BJ (cell line): ENCODE measurements at regions of chr11 and their contacts with region 1.

Region 1: DNA sequence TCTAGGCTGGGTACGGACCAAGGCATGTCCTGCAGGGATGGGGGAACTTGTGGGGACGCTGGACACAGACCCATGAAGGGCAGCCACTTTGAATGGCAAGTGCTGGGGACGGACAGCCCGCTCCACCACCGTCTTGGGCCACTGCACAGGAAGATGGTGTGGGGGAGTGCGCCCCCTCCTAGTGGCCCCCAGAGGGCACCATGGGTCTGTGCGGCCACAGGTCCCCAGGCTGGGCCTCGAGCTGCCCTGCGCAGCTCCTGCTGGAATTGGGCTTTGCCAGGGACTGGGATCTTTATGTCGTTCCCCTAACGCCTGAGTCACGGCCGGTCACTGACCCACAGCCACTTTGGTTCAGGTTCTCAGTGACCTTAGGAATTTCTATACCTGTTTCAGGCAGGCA is 44.4 kb downstream of the NAT10 start:
- DNase-seq: no peak
- H3K4me3 ChIP-seq: no peak overlapping the region
- H3K27me3 ChIP-seq: no peaks in the 10 kb centered on the region
- CTCF ChIP-seq: peak; percentile 57

Region 2: DNA sequence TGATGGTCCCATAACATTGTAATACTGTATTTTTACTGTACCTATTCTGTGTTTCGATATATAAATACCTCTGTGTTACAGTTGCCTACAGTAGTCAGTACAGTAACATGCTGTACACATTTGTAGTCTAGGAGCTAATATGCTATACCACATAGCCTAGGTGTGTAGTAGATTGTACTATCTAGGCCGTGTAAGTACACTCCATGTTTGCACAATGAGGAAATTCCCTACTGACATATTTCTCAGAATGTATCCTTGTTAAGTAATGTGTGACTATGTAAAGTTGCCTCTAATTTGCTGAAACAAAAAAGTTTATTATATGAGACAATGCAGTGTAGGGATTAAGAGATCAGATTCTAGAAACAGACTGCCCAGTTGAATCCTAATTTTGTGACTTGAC is 77.0 kb before region 1 on chr11:
- CTCF ChIA-PET with region 1: no interaction called
- POLR2A ChIA-PET with region 1: no interaction called
- DNase-seq: no peak
- H3K4me3 ChIP-seq: no peak overlapping the region
- H3K27me3 ChIP-seq: no peaks in the 10 kb centered on the region
- CTCF ChIP-seq: no peak

Region 3: GRCh38 chr11:34165518-34166277 is 15.9 kb after region 1 on chr11:
- CTCF ChIA-PET with region 1: interaction called, 11 read pairs
- POLR2A ChIA-PET with region 1: no interaction called
- DNase-seq: no peak
- H3K4me3 ChIP-seq: no peak overlapping the region
- H3K27me3 ChIP-seq: no peaks in the 10 kb centered on the region
- CTCF ChIP-seq: no peak

Region 4: GRCh38 chr11:34262531-34263081 is 112.8 kb after region 1 on chr11:
- CTCF ChIA-PET with region 1: no interaction called
- POLR2A ChIA-PET with region 1: no interaction called
- DNase-seq: no peak
- H3K4me3 ChIP-seq: no peak overlapping the region
- H3K27me3 ChIP-seq: no peaks in the 10 kb centered on the region
- CTCF ChIP-seq: no peak